Activated CD8-positive, alpha-beta T cell treated with anti-CD3 and anti-CD28 coated beads for 36 hours (primary cell): ENCODE measurements at regions of chrX and their contacts with region 1.

Region 1: GRCh38 chrX:136767104-136767941 is 13.4 kb downstream of the ARHGEF6 start:
- DNase-seq: peak; percentile 59
- ATAC-seq: peak; percentile 43
- H3K4me3 Mint-ChIP-seq: peak overlapping the region; percentile 74
- H3K27ac Mint-ChIP-seq: peak overlapping the region; percentile 91
- H3K4me1 Mint-ChIP-seq: peaks cover 64% of the 10 kb centered on the region
- H3K27me3 Mint-ChIP-seq: no peaks in the 10 kb centered on the region
- CTCF ChIP-seq: no peak

Region 2: DNA sequence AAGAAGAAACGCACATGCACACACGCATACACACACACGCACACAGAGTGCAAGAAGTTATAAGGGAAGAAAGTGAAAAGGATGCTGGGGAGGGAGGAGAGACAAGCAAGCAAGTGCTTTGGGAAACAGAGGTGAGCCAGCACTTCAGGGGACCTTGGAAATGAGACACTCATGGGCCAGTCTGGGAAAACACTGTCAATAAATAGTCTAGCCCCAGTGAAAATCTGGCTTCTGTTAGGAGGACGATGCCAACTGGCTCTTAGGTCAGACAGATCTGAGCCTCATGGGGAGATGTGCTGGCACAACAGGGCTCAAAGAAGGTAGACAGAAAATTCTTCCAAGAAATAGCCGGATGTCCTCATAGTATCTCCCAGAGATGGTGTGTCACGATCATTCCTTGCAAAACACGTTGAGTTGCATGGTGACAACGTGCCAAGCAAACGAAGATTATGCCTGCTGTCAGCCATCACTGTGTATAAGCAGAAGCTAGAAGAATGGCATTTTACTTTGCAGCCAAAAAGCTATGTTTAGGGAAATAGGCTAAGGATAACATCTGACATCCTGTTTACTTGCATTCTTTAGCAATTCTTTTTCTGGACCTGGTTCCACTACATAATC is 14.0 kb after region 1 on chrX:
- CTCF ChIA-PET with region 1: no interaction called
- POLR2A ChIA-PET with region 1: interaction called, 29 read pairs
- intact Hi-C with region 1: loop called (anchors 2 kb)
- DNase-seq: no peak
- ATAC-seq: no peak
- H3K4me3 Mint-ChIP-seq: peak overlapping the region; percentile 77
- H3K27ac Mint-ChIP-seq: peak overlapping the region; percentile 99
- H3K4me1 Mint-ChIP-seq: peaks cover 48% of the 10 kb centered on the region
- H3K27me3 Mint-ChIP-seq: no peaks in the 10 kb centered on the region
- CTCF ChIP-seq: no peak